HEK293T (cell line): ENCODE measurements at regions of chr21 and their contacts with region 1.

Region 1: GRCh38 chr21:36319765-36320420 is at the start of gene MORC3:
- DNase-seq: peak; percentile 99

Region 2: GRCh38 chr21:36203617-36203917 is 116.3 kb before region 1 on chr21:
- CTCF ChIA-PET with region 1: no interaction called
- POLR2A ChIA-PET with region 1: interaction called, 13 read pairs
- DNase-seq: no peak